Posterior cingulate gyrus (tissue), 11 donors: ENCODE measurements at regions of chr9 and their contacts with region 1.

Region 1: GRCh38 chr9:101530077-101530711 is 3.5 kb upstream of the RNF20 start:
- DNase-seq: peak in 9 of 10 donors; percentile 43 to 96 (median 75)

Region 2: GRCh38 chr9:101398068-101398929 is 131.9 kb before region 1 on chr9 and contains the starts of genes MRPL50 and ZNF189:
- intact Hi-C with region 1: loop called (anchors 5 kb)
- DNase-seq: peak; percentile 98 to 100 (median 99)

Region 3: GRCh38 chr9:101458955-101459631 is 71.1 kb before region 1 on chr9:
- intact Hi-C with region 1: loop called (anchors 1 kb)
- DNase-seq: peak in 2 of 10 donors; percentile 24 to 78

Region 4: GRCh38 chr9:101628173-101628572 is 98.0 kb after region 1 on chr9:
- intact Hi-C with region 1: no loop called
- DNase-seq: no peak

Region 5: GRCh38 chr9:102135768-102136167 is 605.6 kb after region 1 on chr9:
- intact Hi-C with region 1: no loop called
- DNase-seq: no peak